Activated CD8-positive, alpha-beta T cell treated with anti-CD3 and anti-CD28 coated beads for 36 hours (primary cell): ENCODE measurements at regions of chr14 and their contacts with region 1.

Region 1: GRCh38 chr14:96297000-96297399 is 41.0 kb downstream of the BDKRB1 start:
- DNase-seq: no peak
- ATAC-seq: no peak
- H3K4me3 Mint-ChIP-seq: no peak overlapping the region
- H3K27ac Mint-ChIP-seq: no peak overlapping the region
- H3K4me1 Mint-ChIP-seq: no peaks in the 10 kb centered on the region
- H3K27me3 Mint-ChIP-seq: no peaks in the 10 kb centered on the region
- CTCF ChIP-seq: peak; percentile 42

Region 2: DNA sequence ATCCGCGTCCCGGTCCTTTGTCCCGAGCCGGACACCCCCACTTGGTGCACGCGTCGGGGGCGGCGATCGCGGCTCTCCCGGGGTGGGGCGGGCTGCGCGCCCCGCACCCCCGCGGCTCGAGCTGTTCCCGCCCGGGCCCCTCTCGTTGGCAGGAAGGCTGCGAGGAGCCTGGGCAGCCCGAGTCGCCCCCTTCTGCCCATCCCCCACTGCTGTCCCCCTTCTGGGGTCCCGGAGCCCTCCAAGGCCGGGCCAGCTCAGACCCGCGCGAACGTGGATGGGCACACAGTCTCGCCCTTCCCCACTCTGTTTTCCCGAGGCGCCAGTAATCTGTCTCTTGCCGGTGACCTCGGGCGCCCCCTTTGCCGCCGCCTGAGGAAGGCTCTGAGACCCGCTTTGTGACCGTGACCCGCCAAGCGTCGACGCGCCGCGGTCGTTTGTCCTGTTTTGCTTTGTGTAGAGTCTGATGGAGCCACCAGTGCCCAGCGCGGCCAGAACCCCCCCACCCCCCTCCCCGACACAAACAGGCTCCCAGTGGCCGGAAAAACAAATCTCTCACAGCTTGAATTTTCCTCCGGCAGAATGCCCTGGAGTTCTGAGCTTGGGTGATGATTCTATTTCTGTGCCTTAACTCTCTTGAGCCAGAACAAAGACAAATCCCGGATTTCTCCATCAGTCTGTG is 257.2 kb before region 1 on chr14:
- CTCF ChIA-PET with region 1: no interaction called
- POLR2A ChIA-PET with region 1: no interaction called
- intact Hi-C with region 1: no loop called
- DNase-seq: peak; percentile 29
- ATAC-seq: peak; percentile 50
- H3K4me3 Mint-ChIP-seq: peak overlapping the region; percentile 73
- H3K27ac Mint-ChIP-seq: peak overlapping the region; percentile 19
- H3K4me1 Mint-ChIP-seq: peaks cover 11% of the 10 kb centered on the region
- H3K27me3 Mint-ChIP-seq: peaks cover 52% of the 10 kb centered on the region
- CTCF ChIP-seq: peak; percentile 27

Region 3: GRCh38 chr14:96309896-96310330 is 12.9 kb after region 1 on chr14:
- CTCF ChIA-PET with region 1: interaction called, 11 read pairs
- POLR2A ChIA-PET with region 1: no interaction called
- intact Hi-C with region 1: no loop called
- DNase-seq: no peak
- ATAC-seq: no peak
- H3K4me3 Mint-ChIP-seq: no peak overlapping the region
- H3K27ac Mint-ChIP-seq: no peak overlapping the region
- H3K4me1 Mint-ChIP-seq: no peaks in the 10 kb centered on the region
- H3K27me3 Mint-ChIP-seq: no peaks in the 10 kb centered on the region
- CTCF ChIP-seq: no peak

Region 4: GRCh38 chr14:96424109-96424989 is 127.3 kb after region 1 on chr14:
- CTCF ChIA-PET with region 1: interaction called, 7 read pairs
- POLR2A ChIA-PET with region 1: no interaction called
- intact Hi-C with region 1: loop called (anchors 2 kb)
- DNase-seq: peak; percentile 41
- ATAC-seq: peak; percentile 89
- H3K4me3 Mint-ChIP-seq: peak overlapping the region; percentile 68
- H3K27ac Mint-ChIP-seq: no peak overlapping the region
- H3K4me1 Mint-ChIP-seq: no peaks in the 10 kb centered on the region
- H3K27me3 Mint-ChIP-seq: peaks cover 9% of the 10 kb centered on the region
- CTCF ChIP-seq: peak; percentile 93

Region 5: DNA sequence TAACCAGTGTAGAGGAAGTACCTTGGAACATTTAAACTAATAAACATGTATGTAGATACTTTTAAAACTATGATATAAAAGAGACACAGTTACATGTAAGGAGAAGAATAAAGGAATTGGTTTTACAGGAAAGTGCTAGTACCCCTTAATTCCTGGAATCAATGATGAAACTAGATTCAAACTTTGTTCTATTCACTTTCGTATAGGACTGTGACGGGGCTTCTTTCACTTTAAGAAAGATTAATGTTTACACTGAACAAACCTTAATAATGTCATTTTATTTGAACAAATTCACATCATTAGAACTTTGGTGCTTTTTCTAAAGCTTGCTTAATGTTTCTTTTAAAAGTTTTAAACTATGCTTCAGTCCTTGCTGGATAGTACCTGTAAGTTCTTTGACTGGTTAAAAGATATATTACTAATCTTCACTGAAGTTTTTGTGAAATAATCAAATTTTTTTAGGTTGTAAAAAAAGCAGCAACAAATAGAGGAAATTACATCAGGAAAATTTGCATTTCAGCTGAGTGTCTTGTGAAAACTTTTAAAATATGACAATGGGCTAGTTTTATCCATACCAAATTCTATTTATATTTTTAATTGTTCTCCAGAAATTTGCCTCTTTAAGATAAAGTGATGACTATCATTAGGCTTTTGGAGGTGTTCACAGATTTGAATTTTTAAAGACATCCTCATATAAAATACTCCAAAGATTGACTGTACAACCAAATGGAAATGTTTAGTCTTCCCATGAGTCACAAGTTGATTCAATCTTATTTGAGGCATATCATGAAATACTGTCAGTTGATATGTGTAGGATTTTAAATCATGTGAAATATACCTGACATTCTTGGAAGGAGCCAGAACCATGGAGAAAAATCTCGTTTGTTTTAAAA is 241.3 kb after region 1 on chr14:
- CTCF ChIA-PET with region 1: no interaction called
- POLR2A ChIA-PET with region 1: no interaction called
- intact Hi-C with region 1: no loop called
- DNase-seq: no peak
- ATAC-seq: no peak
- H3K4me3 Mint-ChIP-seq: no peak overlapping the region
- H3K27ac Mint-ChIP-seq: peak overlapping the region; percentile 63
- H3K4me1 Mint-ChIP-seq: peaks cover 23% of the 10 kb centered on the region
- H3K27me3 Mint-ChIP-seq: no peaks in the 10 kb centered on the region
- CTCF ChIP-seq: no peak